ENCODE measurements at regions of chr12 and their contacts with region 1.

Region 1: DNA sequence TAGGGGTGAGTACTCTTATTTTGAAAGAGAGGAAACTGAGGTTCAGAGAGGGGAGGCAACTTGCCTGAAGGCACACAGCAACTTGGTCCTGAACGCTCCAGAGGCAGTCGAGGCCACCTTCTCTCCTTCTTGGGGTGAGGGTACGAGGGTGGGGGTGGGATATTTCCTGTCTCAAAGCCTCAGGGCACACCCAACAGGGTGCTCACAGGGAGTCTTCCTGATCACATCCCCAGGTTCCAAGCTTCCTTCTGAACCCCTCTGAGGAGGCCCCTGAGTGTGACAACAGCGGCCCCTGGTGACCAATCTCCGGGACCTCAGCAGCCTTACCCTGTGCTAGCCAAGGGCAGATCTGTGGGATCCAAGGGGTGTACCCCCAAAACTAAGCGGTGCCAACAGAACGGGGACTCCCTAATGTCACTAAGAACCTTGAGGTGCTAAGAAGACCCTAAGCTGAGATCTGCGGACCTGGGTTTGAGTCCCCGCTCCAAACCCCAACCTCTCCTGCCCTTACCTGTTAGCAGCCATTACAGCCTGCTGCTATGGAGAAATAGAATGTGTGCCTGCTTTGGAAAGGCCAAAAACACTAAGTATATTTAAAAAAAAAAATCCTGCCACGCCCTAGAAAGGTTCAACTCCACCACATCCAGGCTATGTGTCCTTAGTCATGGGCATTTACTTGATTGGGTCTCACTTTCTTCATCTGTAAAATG is 57.9 kb downstream of the TRPV4 start:
- DNase-seq: peak; percentile 87
- ATAC-seq: peak; percentile 78
- H3K4me3 Mint-ChIP-seq: no peak overlapping the region
- H3K27ac Mint-ChIP-seq: no peak overlapping the region
- H3K4me1 Mint-ChIP-seq: peaks cover 7% of the 10 kb centered on the region
- H3K27me3 Mint-ChIP-seq: peaks cover 2% of the 10 kb centered on the region

Region 2: DNA sequence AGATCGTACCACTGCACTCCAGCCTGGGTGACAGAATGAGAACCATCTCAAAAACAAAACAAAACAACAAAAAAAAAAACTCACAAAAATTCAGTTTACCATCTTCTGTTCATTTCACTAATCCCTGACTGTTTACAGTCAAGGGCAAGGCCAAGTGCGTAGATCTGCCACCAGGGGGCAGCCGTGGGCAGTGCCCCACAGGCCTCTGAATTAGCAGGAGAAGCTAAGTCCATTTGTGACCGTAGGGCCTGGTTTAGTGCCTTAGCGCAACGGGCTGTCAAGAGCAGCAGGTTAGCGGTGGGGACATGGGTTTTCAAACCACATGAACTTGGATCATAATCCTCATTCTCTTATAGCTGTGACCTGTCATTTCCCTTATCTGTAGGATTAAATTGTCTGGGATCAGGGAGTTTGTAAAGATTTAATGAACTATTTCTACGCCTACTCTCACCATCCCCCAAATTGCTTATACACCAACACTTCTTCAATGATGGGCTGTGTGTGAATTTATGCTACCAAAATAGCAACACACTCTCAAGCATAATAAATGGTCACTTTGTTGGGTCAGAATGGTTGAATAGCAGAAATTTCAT is 347.2 kb before region 1 on chr12:
- CTCF ChIA-PET with region 1: interaction called, 7 read pairs
- POLR2A ChIA-PET with region 1: no interaction called
- intact Hi-C with region 1: loop called (anchors 1 to 2 kb)
- DNase-seq: peak; percentile 86
- ATAC-seq: peak; percentile 82
- H3K4me3 Mint-ChIP-seq: no peak overlapping the region
- H3K27ac Mint-ChIP-seq: no peak overlapping the region
- H3K4me1 Mint-ChIP-seq: peaks cover 2% of the 10 kb centered on the region
- H3K27me3 Mint-ChIP-seq: peaks cover 6% of the 10 kb centered on the region

Region 3: GRCh38 chr12:109518820-109519665 is 256.3 kb before region 1 on chr12:
- CTCF ChIA-PET with region 1: interaction called, 11 read pairs
- POLR2A ChIA-PET with region 1: no interaction called
- intact Hi-C with region 1: loop called (anchors 1 kb)
- DNase-seq: peak; percentile 75
- ATAC-seq: peak; percentile 63
- H3K4me3 Mint-ChIP-seq: no peak overlapping the region
- H3K27ac Mint-ChIP-seq: no peak overlapping the region
- H3K4me1 Mint-ChIP-seq: no peaks in the 10 kb centered on the region
- H3K27me3 Mint-ChIP-seq: no peaks in the 10 kb centered on the region

Region 4: DNA sequence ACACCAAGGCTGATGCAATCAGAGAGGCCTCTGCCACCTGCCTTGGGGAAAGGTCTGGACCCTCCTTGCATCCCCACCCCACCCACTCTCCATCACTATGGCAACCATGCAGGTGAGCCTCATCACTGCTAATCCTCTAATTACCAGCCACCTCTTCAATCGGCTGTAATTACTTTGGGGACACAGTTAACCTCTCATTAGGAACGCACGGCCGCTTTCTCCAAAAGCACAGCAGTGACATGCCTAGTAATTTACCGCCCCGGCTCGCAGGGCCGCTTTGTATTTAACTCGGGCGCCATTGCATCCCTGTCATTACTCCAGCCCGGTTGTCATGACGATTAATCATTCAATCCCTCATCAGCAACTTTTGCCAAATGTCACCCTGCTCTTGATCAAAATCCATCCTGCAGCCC is 98.0 kb before region 1 on chr12:
- CTCF ChIA-PET with region 1: no interaction called
- POLR2A ChIA-PET with region 1: no interaction called
- intact Hi-C with region 1: no loop called
- DNase-seq: no peak
- ATAC-seq: no peak
- H3K4me3 Mint-ChIP-seq: no peak overlapping the region
- H3K27ac Mint-ChIP-seq: no peak overlapping the region
- H3K4me1 Mint-ChIP-seq: no peaks in the 10 kb centered on the region
- H3K27me3 Mint-ChIP-seq: peaks cover 8% of the 10 kb centered on the region

Measured in activated CD4-positive, alpha-beta T cell treated with anti-CD3 and anti-CD28 coated beads for 36 hours (primary cell).